Left colon (tissue), 2 donors: ENCODE measurements at regions of chr7 and their contacts with region 1.

Region 1: GRCh38 chr7:95690367-95690947 is 81.9 kb upstream of the DYNC1I1 start:
- DNase-seq: no peak
- ATAC-seq: peak; percentile 72

Region 2: DNA sequence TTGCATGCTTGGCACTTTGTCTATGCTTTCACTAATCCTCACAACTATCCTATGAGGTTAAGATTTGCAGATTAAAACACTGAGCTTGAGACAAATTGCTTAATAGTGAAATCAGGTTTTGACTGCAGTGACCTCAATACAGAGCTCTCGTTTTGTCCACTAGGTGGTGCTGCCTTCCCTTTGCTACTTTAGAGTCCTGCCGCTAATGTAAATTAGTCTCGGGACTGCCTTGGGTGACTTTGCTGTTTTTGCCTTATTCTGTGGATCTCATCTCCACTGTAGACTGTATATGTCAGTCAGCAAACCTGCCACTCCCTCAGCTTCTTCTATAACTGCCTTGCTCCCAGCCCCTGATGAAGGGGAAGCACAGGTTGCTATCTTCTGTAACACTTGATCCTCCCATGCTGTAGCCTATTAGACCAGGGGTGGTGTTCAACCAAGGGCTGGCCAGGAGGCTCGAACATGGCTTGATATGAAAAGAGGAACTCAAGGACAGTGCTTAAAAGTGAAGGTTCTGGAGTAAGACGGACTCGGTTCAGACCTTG is 178.7 kb before region 1 on chr7:
- intact Hi-C with region 1: loop called in 1 of 2 experiments (anchors 2 kb)
- DNase-seq: peak; percentile 54 to 79
- ATAC-seq: peak; percentile 85

Region 3: GRCh38 chr7:95527033-95527775 is 163.3 kb before region 1 on chr7:
- intact Hi-C with region 1: loop called in 1 of 2 experiments (anchors 5 kb)
- DNase-seq: peak; percentile 28 to 53
- ATAC-seq: peak; percentile 81

Region 4: DNA sequence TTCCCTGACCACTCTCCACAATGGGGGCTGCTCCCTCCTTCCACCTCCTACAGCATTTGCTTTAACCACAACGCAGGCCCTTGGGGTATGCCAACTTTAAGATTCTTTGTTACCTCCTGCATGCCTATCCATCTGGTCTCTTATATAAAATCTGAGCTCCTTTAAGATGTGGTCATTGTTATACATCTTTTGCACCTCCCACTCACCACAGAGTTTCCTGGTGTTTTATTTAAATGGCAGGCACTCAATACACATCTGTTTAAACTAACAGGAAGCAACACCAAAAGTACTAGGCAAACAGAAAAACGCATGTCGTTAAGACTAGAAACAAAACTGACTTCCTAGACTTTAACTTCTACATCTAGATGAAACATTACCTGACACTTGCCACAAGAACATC is 595.1 kb after region 1 on chr7:
- intact Hi-C with region 1: no loop called
- DNase-seq: no peak
- ATAC-seq: peak; percentile 53